ENCODE measurements at regions of chr14 and their contacts with region 1.

Region 1: GRCh38 chr14:104542871-104543830 is 36.4 kb upstream of the C14orf180 start:
- DNase-seq: no peak
- H3K4me3 ChIP-seq: no peak overlapping the region
- H3K27ac ChIP-seq: no peak overlapping the region
- H3K4me1 ChIP-seq: no peaks in the 10 kb centered on the region
- H3K27me3 ChIP-seq: peaks cover 5% of the 10 kb centered on the region
- CTCF ChIP-seq: no peak

Region 2: DNA sequence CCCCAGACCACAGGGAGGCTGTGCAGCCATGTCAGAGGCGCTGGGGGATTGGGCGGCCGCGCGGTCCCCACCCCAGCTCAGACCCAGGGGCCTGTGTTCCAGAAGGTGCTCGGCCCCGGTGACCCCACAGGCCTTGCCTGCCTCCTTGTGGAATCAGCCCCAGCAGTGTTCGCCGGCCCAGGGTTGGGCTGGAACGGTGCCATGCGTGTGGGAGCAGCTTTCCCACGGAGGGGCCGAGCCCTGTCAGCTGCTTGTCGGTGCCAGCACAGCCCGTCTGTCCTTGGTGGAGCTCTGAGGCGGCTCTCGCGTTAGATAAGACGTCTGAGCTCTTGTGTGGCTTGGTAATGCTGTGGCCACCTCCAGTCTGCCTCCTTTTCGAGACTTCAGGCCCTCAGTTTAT is 819.0 kb before region 1 on chr14:
- CTCF ChIA-PET with region 1: no interaction called
- dilution Hi-C with region 1: no loop called
- in situ Hi-C with region 1: no loop called
- intact Hi-C with region 1: no loop called
- DNase-seq: no peak
- H3K4me3 ChIP-seq: no peak overlapping the region
- H3K27ac ChIP-seq: no peak overlapping the region
- H3K4me1 ChIP-seq: peaks cover 24% of the 10 kb centered on the region
- H3K27me3 ChIP-seq: no peaks in the 10 kb centered on the region
- CTCF ChIP-seq: no peak

Region 3: GRCh38 chr14:104149617-104150135 is 393.5 kb before region 1 on chr14:
- CTCF ChIA-PET with region 1: no interaction called
- dilution Hi-C with region 1: loop called (anchors 5 kb)
- in situ Hi-C with region 1: no loop called
- intact Hi-C with region 1: no loop called
- DNase-seq: no peak
- H3K4me3 ChIP-seq: no peak overlapping the region
- H3K27ac ChIP-seq: no peak overlapping the region
- H3K4me1 ChIP-seq: no peaks in the 10 kb centered on the region
- H3K27me3 ChIP-seq: no peaks in the 10 kb centered on the region
- CTCF ChIP-seq: no peak

Region 4: DNA sequence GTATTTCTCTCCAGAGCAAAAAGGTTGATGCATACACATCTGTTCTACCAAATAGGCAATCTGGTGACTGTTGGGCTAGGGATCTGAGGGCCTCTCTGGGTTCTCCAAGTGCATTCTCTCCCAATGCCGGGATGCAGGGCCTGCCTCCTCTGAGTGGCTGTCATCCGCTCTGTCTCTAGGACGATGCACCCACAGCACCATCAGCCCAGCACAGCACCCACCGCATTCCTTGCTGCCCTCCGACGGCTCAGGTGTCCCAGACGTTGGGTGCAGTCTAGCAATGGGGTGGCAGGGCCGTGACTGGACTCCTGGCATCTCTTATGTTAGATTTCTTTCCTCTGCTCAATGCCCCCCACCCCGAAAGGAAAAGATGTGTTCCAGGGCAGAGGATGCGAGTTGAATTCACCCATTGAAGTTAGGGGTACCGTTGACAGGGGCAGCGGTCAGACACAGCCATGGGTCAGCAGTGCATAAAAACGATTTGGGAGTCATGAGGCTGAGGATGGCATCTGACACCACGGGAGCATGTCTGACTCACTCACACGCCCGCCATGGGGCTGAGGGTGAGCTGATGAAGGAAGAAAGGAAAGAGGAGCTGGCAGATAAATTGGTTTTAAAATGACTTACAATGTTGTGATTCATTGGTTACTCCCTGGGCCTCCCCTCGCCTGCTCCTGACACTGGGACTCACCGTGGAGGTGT is 56.8 kb before region 1 on chr14:
- CTCF ChIA-PET with region 1: no interaction called
- dilution Hi-C with region 1: loop called (anchors 5 kb)
- in situ Hi-C with region 1: no loop called
- intact Hi-C with region 1: no loop called
- DNase-seq: no peak
- H3K4me3 ChIP-seq: no peak overlapping the region
- H3K27ac ChIP-seq: no peak overlapping the region
- H3K4me1 ChIP-seq: no peaks in the 10 kb centered on the region
- H3K27me3 ChIP-seq: no peaks in the 10 kb centered on the region
- CTCF ChIP-seq: no peak

Region 5: DNA sequence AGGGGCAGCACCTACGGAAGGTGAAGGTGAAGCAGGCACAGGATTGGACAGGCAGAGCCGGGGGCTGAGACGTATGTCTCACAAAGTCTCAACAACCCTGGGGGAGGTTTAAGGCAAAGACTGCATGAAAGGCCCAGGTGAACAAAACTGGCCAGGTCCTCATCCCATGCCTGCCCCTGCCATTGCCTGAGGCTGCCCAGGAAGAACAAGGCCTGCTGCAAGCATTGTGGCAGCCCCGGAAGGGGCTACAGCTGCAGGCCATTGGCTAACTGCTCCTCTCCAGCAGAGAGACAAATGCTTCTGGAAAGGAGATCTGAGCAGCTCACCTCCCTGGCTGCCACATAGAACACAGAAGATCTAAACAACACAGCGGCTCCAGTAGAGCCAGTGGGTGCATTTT is 81.8 kb after region 1 on chr14:
- CTCF ChIA-PET with region 1: no interaction called
- dilution Hi-C with region 1: loop called (anchors 5 kb)
- in situ Hi-C with region 1: no loop called
- intact Hi-C with region 1: no loop called
- DNase-seq: no peak
- H3K4me3 ChIP-seq: no peak overlapping the region
- H3K27ac ChIP-seq: no peak overlapping the region
- H3K4me1 ChIP-seq: no peaks in the 10 kb centered on the region
- H3K27me3 ChIP-seq: no peaks in the 10 kb centered on the region
- CTCF ChIP-seq: no peak

Measured in mammary epithelial cell (primary cell).